Aorta (tissue), 5 donors: ENCODE measurements at regions of chr4 and their contacts with region 1.

Region 1: DNA sequence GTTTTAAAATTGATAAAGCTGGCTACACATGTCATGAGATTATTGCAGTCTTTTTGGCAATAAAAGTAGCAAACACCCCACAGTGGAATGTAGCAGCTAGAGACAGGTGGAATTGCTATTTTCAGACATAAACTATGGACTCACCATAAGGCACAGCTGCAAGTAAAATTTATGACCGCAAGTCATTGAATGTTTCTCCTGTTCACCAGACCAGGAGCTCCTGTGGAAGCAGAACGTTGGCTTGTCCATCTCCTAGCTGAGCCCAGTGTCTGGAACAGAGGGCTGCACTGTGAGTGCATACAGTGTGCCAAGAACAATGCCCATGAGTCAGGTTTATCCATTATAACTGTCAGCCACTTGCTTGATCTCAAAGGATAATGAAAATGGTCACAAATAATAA is 538.2 kb downstream of the INPP4B start:
- DNase-seq: no peak
- ATAC-seq: no peak
- H3K4me3 ChIP-seq: no peak overlapping the region
- H3K27ac ChIP-seq: no peak overlapping the region
- H3K4me1 ChIP-seq: peaks cover 3 to 4% of the 10 kb centered on the region in 2 donors
- H3K27me3 ChIP-seq: no peaks in the 10 kb centered on the region

Region 2: GRCh38 chr4:141890279-141890678 is 417.6 kb before region 1 on chr4:
- intact Hi-C with region 1: no loop called
- DNase-seq: no peak
- ATAC-seq: no peak
- H3K4me3 ChIP-seq: no peak overlapping the region
- H3K27ac ChIP-seq: no peak overlapping the region
- H3K4me1 ChIP-seq: no peaks in the 10 kb centered on the region
- H3K27me3 ChIP-seq: no peaks in the 10 kb centered on the region

Region 3: GRCh38 chr4:142112451-142112850 is 195.4 kb before region 1 on chr4:
- intact Hi-C with region 1: no loop called
- DNase-seq: no peak
- ATAC-seq: no peak
- H3K4me3 ChIP-seq: no peak overlapping the region
- H3K27ac ChIP-seq: no peak overlapping the region
- H3K4me1 ChIP-seq: no peaks in the 10 kb centered on the region
- H3K27me3 ChIP-seq: no peaks in the 10 kb centered on the region

Region 4: GRCh38 chr4:142265536-142265935 is 42.3 kb before region 1 on chr4:
- intact Hi-C with region 1: loop called in 1 of 2 experiments (anchors 5 kb)
- DNase-seq: no peak
- ATAC-seq: peak; percentile 80
- H3K4me3 ChIP-seq: no peak overlapping the region
- H3K27ac ChIP-seq: no peak overlapping the region
- H3K4me1 ChIP-seq: peaks cover 0 to 5% of the 10 kb centered on the region in 2 donors
- H3K27me3 ChIP-seq: no peaks in the 10 kb centered on the region

Region 5: DNA sequence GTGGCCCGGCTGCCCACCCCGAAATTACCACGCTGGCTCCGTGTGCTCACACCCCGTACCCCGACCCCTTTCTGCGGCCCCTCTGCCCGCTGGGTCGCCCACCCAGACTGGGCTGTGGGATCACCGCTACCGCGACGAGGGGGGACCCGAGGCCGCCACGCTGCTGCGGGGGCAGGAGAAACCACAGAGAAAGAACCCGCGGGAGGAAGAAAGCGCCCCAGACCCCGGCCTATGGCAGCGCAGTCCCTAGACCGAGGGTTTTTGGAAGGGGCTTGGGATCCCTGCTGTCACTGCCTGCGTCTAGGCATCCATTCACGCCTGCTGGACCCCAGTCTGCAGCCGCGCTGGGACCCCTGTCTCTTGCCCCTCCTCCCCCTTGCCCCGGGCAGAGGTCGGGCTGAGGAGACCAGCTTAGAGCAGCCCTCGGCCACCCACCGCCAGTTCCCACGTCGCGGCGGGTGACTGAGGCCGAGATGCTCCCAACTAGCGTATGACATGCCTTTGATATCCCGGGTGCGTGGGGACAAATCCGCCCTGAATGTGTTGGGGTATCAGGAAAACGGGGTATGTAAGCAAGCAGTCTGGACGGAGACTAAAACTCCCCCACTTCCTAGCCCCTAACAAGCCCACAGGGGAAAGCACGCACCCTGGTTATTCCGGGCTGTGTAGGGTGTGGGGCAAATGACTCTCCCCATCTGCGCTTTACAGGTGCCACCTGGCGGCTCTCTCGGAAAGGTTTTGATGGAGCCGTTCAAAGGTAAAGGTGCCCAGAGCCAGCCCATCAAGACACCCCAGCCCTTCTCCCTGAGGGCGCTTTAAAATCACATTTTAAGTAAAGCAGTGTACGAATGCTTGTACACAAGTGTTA is 539.1 kb after region 1 on chr4:
- intact Hi-C with region 1: loop called in 1 of 2 experiments (anchors 5 kb)
- DNase-seq: peak; percentile 52 to 73
- ATAC-seq: peak; percentile 47
- H3K4me3 ChIP-seq: peak overlapping the region; percentile 9 to 84
- H3K27ac ChIP-seq: peak overlapping the region in 1 of 2 donors; percentile 22
- H3K4me1 ChIP-seq: no peaks in the 10 kb centered on the region
- H3K27me3 ChIP-seq: no peaks in the 10 kb centered on the region